CD14-positive monocyte (primary cell): ENCODE measurements at regions of chr9 and their contacts with region 1.

Region 1: GRCh38 chr9:21455320-21455719 is 15.1 kb downstream of the IFNA1 start:
- DNase-seq: peak; percentile 8 to 45 (median 33)
- H3K4me3 ChIP-seq: no peak overlapping the region
- H3K4me3 Mint-ChIP-seq: no peak overlapping the region
- H3K27ac ChIP-seq: no peak overlapping the region
- H3K27ac Mint-ChIP-seq: no peak overlapping the region
- H3K4me1 ChIP-seq: no peaks in the 10 kb centered on the region
- H3K4me1 Mint-ChIP-seq: peaks cover 2% of the 10 kb centered on the region
- H3K27me3 ChIP-seq: peaks cover 0 to 2% of the 10 kb centered on the region in 2 donors
- H3K27me3 Mint-ChIP-seq: peaks cover 2 to 6% (median 2%) of the 10 kb centered on the region in 3 donors
- CTCF ChIP-seq: peak; percentile 81

Region 2: DNA sequence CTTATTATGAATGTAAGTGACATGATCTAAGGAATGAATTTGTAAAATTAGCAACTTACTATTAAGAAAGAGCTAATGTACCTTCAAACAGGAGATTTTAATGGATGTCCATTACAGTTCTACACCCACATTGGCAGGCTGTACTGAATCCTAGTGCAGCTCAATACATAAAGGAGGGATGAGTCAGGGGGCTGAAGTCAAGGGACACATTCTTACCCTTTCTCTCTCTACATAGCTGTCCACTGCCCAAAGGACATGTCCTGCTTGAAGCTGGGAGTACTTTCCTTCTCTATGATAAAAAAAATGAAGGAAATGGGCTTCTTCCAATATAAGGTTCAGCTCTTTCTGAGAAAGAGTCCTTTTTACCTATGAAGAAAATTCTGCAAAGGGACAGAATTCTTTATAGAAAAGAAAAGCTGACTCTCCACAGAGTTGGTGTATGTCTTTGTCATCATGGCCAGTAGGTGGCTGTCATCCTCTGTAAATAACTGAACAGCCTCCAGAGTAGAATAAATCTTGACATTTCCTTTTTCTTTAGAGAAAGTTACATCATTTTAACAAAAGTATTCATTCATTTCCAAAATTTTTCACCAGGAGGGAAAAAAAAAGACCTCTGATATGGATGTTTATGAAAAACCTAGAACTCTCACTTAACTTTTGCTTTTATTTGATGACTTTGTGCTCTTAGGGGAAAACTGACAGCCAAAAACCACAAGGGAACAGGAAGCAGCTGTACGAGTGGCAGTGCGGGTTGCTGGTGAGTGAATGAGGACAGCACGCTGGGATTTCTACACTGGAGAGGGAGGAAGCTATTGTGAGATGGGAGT is 202.4 kb before region 1 on chr9:
- intact Hi-C with region 1: loop called in 1 of 2 experiments (anchors 10 kb)
- DNase-seq: peak; percentile 36 to 62 (median 46)
- H3K4me3 ChIP-seq: peak overlapping the region in 1 of 3 experiments; percentile 21
- H3K4me3 Mint-ChIP-seq: peak overlapping the region in 1 of 2 donors; percentile 59
- H3K27ac ChIP-seq: no peak overlapping the region
- H3K27ac Mint-ChIP-seq: peak overlapping the region in 3 of 7 donors; percentile 14 to 72 (median 22)
- H3K4me1 ChIP-seq: peaks cover 22 to 23% of the 10 kb centered on the region in 2 donors
- H3K4me1 Mint-ChIP-seq: peaks cover 34% of the 10 kb centered on the region
- H3K27me3 ChIP-seq: peaks cover 8 to 18% of the 10 kb centered on the region in 2 donors
- H3K27me3 Mint-ChIP-seq: peaks cover 7 to 22% (median 21%) of the 10 kb centered on the region in 3 donors
- CTCF ChIP-seq: peak; percentile 76

Region 3: DNA sequence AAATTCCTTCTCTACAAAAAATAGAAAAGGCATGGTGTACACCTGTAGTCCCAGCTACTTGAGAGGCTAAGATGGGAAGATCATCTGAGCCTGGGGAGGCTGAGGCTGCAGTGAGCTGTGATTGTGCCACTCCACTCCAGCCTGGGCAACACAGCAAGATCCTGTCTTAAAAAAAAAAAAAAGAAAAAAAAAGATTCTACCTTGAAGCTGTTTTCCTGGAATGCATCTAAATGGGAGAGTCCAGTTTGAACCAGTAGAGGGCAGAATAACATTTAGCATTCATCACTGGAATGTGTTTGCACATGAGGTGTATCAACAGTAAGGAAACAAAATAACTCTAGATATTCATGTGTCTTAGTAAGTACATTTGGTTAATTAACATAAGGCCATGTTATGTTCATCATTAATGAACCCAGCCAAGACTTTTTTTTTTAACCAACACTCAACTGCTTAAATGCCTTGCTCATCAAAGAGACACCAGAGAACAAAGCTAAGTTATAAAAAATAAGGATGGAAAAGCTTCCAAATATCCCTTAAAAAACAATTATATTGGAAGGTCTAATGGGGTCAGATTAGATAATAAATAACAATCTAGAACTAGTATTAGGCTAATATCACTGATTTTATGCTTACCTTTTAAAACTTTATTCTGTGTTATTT is 10.7 kb after region 1 on chr9:
- intact Hi-C with region 1: no loop called
- DNase-seq: peak; percentile 14 to 29 (median 28)
- H3K4me3 ChIP-seq: no peak overlapping the region
- H3K4me3 Mint-ChIP-seq: no peak overlapping the region
- H3K27ac ChIP-seq: no peak overlapping the region
- H3K27ac Mint-ChIP-seq: no peak overlapping the region
- H3K4me1 ChIP-seq: no peaks in the 10 kb centered on the region
- H3K4me1 Mint-ChIP-seq: no peaks in the 10 kb centered on the region
- H3K27me3 ChIP-seq: no peaks in the 10 kb centered on the region
- H3K27me3 Mint-ChIP-seq: peaks cover 2 to 8% (median 3%) of the 10 kb centered on the region in 3 donors
- CTCF ChIP-seq: peak; percentile 78

Region 4: GRCh38 chr9:21481470-21482056 is 26.2 kb after region 1 on chr9:
- intact Hi-C with region 1: no loop called
- DNase-seq: peak; percentile 59 to 76 (median 71)
- H3K4me3 ChIP-seq: peak overlapping the region in 2 of 3 experiments; percentile 40 to 63
- H3K4me3 Mint-ChIP-seq: peak overlapping the region; percentile 9 to 59
- H3K27ac ChIP-seq: peak overlapping the region in 1 of 2 donors; percentile 81
- H3K27ac Mint-ChIP-seq: peak overlapping the region; percentile 15 to 88 (median 79)
- H3K4me1 ChIP-seq: peaks cover 9 to 22% of the 10 kb centered on the region in 2 donors
- H3K4me1 Mint-ChIP-seq: peaks cover 10% of the 10 kb centered on the region
- H3K27me3 ChIP-seq: no peaks in the 10 kb centered on the region
- H3K27me3 Mint-ChIP-seq: peaks cover 0 to 3% (median 0%) of the 10 kb centered on the region in 3 donors
- CTCF ChIP-seq: no peak